Activated CD4-positive, alpha-beta T cell treated with anti-CD3 and anti-CD28 coated beads, Interleukin-2, amount 10 ng/mL, durations not matched to agents 24 days and 14 days (primary cell): ENCODE measurements at regions of chr21 and their contacts with region 1.

Region 1: GRCh38 chr21:15455819-15456462 is 273.8 kb upstream of the USP25 start:
- DNase-seq: no peak
- H3K4me3 Mint-ChIP-seq: no peak overlapping the region
- H3K27ac Mint-ChIP-seq: no peak overlapping the region
- H3K4me1 Mint-ChIP-seq: no peaks in the 10 kb centered on the region
- H3K27me3 Mint-ChIP-seq: no peaks in the 10 kb centered on the region

Region 2: GRCh38 chr21:15468368-15468767 is 12.4 kb after region 1 on chr21:
- intact Hi-C with region 1: loop called (anchors 1 kb)
- DNase-seq: no peak
- H3K4me3 Mint-ChIP-seq: no peak overlapping the region
- H3K27ac Mint-ChIP-seq: no peak overlapping the region
- H3K4me1 Mint-ChIP-seq: no peaks in the 10 kb centered on the region
- H3K27me3 Mint-ChIP-seq: peaks cover 4% of the 10 kb centered on the region

Region 3: DNA sequence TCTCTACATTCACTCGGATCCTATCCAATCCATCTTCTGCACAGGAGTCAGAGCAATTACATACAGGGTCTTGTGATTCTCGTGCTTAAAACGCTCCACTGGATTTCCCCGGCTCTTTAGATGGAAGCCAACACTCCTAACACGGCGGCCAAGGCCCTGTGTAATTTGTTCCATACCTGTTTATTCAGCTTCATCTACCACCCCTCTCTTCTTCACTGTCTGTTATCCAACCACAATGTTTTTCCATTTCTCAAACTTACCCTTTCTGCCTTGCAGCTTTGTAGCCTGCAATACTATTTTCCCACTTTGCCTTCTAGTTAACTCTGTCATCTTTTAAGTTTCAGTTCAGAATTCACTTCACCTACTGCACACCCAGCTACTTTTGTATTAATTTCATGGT is 24.2 kb after region 1 on chr21:
- intact Hi-C with region 1: no loop called
- DNase-seq: no peak
- H3K4me3 Mint-ChIP-seq: no peak overlapping the region
- H3K27ac Mint-ChIP-seq: peak overlapping the region; percentile 48
- H3K4me1 Mint-ChIP-seq: peaks cover 17% of the 10 kb centered on the region
- H3K27me3 Mint-ChIP-seq: peaks cover 2% of the 10 kb centered on the region

Region 4: DNA sequence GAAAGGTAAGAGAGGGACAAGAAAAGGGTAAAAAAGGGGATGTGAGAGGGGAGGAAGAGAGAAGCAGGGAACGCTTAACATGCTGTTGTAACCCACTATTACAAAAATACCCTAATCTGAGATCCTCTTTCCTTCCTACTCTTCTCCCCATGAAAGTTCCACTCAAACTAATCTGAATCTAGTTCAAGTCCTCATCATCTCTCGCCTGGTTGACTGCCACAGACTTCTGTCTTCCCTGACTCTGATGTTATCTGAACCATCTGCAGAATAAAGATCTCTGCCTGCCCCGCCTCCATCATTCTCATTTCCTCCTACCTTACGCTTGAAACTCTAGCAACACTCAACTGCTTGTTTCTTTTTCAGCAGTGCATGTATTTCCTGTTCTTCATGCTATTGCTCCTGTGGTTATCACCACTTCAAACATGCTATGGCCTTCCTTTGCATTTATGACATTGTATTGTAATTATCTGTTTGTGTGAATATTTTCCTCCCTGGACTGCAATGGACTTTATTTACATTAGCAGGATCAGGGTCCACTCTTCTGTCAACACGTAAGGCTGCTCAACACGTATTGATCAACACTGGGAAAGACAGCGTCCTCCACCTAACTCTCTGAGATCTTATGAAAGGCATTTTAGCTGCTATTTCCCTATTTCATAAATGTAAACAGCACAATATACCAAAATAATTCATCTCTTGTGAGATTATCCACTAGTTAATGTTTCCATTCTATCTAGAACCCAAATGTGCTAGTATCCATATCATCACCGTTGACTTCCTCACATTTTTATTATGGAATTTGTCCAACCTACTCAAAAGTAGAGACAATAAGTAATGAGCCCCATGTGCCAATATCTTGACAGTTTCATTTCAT is 58.4 kb after region 1 on chr21:
- intact Hi-C with region 1: no loop called
- DNase-seq: peak; percentile 90
- H3K4me3 Mint-ChIP-seq: peak overlapping the region; percentile 29
- H3K27ac Mint-ChIP-seq: peak overlapping the region; percentile 61
- H3K4me1 Mint-ChIP-seq: peaks cover 18% of the 10 kb centered on the region
- H3K27me3 Mint-ChIP-seq: no peaks in the 10 kb centered on the region

Region 5: GRCh38 chr21:16794944-16795343 is 1339.0 kb after region 1 on chr21:
- intact Hi-C with region 1: no loop called
- DNase-seq: no peak
- H3K4me3 Mint-ChIP-seq: no peak overlapping the region
- H3K27ac Mint-ChIP-seq: no peak overlapping the region
- H3K4me1 Mint-ChIP-seq: no peaks in the 10 kb centered on the region
- H3K27me3 Mint-ChIP-seq: no peaks in the 10 kb centered on the region